ENCODE measurements at regions of chr5 and their contacts with region 1.

Region 1: DNA sequence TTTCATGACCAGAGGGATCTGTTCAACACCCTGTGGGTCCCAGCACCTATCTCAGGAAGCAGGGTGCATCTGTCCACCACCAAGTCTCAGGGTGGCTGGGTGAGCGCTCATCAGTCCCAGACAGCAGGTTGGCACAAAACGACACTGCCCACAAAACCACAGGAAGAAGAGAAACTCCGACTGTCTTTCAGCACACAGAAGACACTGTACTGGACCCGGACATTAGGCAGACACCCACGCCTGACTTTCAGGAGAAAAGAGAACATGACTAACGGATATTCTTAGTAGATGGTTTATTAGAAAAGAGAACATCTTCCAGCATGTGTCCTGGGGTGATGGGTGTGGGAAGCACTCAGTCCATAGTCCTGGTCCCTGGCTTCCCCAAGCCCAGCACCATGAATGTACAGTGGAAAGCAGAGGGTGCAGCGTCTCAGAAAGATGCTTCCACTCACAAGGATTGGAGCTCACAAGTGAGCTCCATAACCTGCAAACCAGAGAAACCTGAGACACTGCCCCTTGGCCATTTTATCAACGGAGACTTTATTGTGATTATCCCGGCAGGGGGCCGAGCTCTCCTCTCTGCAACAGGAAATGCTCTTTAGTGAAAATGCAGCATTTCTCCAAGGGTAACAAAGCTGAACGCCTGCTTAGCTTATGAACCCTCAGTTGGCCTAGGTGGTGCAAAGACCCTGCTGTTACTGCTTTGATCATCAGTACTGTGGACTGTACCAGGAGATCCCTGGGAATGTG is 35.8 kb upstream of the LCP2 start:
- DNase-seq: peak; percentile 79
- ATAC-seq: peak; percentile 33
- H3K4me3 Mint-ChIP-seq: peak overlapping the region; percentile 44
- H3K27ac Mint-ChIP-seq: no peak overlapping the region
- H3K4me1 Mint-ChIP-seq: peaks cover 77% of the 10 kb centered on the region
- H3K27me3 Mint-ChIP-seq: no peaks in the 10 kb centered on the region

Region 2: DNA sequence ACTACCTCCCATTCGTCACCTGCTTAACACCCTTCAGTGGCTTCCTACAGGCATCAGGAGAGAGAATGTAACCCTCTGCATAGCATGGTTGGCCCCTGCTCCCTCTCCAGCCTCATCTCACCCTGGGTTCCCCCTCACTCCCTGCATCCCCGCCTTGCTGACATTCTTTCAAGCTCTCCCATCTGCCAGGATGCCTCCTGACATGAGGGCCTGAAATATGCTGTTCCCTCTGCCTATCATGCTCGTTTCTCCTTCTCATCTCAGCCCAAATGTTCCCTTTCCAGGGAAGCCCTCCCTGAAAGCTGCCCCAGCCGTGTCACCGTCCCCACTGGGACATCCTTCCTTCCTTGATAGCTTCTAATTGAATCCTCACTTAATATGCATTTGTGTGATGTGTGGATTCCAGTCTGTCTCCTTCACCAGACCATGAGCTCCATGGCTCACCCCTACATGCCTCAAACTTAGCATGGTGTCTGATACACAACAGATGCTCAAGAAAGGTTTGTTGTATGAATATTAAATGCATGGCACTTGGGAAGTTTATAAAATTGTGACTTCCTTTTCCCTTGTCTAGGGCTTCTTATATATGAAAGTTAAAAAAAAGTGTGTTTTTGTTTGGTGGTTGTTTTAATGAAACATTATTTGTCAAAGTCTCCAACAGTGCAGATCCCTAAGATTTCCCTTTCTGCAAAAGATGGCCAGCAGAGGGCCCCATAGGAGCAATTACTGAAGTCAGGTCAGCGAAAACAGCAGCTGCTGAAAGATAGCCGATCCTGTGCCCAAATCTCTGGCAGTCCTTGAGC is 107.8 kb before region 1 on chr5:
- CTCF ChIA-PET with region 1: interaction called, 94 read pairs
- POLR2A ChIA-PET with region 1: no interaction called
- intact Hi-C with region 1: no loop called
- DNase-seq: peak; percentile 87
- ATAC-seq: peak; percentile 64
- H3K4me3 Mint-ChIP-seq: no peak overlapping the region
- H3K27ac Mint-ChIP-seq: no peak overlapping the region
- H3K4me1 Mint-ChIP-seq: peaks cover 3% of the 10 kb centered on the region
- H3K27me3 Mint-ChIP-seq: no peaks in the 10 kb centered on the region

Region 3: GRCh38 chr5:170267431-170268152 is 65.7 kb before region 1 on chr5:
- CTCF ChIA-PET with region 1: interaction called, 89 read pairs
- POLR2A ChIA-PET with region 1: interaction called, 8 read pairs
- intact Hi-C with region 1: loop called in 1 of 2 experiments (anchors 1 kb)
- DNase-seq: peak; percentile 91
- ATAC-seq: peak; percentile 50
- H3K4me3 Mint-ChIP-seq: peak overlapping the region; percentile 34
- H3K27ac Mint-ChIP-seq: peak overlapping the region; percentile 86
- H3K4me1 Mint-ChIP-seq: peaks cover 93% of the 10 kb centered on the region
- H3K27me3 Mint-ChIP-seq: no peaks in the 10 kb centered on the region

Region 4: DNA sequence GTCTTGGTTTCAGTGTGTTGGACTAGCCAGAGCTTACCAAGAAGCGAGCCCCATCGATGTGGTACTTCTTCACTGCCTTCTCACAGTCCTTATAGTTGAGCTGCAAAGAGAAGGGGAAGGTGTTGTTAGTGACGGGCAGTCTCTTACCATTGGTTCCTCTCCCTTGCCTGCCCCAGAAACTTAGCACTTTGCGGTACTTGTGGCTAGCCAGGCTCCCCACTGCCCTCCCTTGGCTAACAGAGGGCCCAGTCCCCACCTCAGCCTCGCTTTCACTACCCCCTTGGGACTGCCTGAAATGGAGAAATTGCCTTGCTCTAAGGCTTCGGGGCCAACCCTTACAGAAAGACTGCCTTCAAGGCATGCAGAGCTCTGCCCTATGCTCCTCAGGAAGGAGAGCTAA is 40.1 kb before region 1 on chr5:
- CTCF ChIA-PET with region 1: interaction called, 85 read pairs
- POLR2A ChIA-PET with region 1: interaction called, 23 read pairs
- intact Hi-C with region 1: loop called (anchors 1 kb)
- DNase-seq: peak; percentile 70
- ATAC-seq: peak; percentile 16
- H3K4me3 Mint-ChIP-seq: peak overlapping the region; percentile 88
- H3K27ac Mint-ChIP-seq: peak overlapping the region; percentile 97
- H3K4me1 Mint-ChIP-seq: peaks cover 72% of the 10 kb centered on the region
- H3K27me3 Mint-ChIP-seq: no peaks in the 10 kb centered on the region

Region 5: GRCh38 chr5:170312666-170313065 is 20.7 kb before region 1 on chr5:
- CTCF ChIA-PET with region 1: interaction called, 35 read pairs
- POLR2A ChIA-PET with region 1: interaction called, 52 read pairs
- intact Hi-C with region 1: loop called (anchors 1 kb)
- DNase-seq: peak; percentile 84
- ATAC-seq: peak; percentile 91
- H3K4me3 Mint-ChIP-seq: peak overlapping the region; percentile 80
- H3K27ac Mint-ChIP-seq: peak overlapping the region; percentile 98
- H3K4me1 Mint-ChIP-seq: peaks cover 67% of the 10 kb centered on the region
- H3K27me3 Mint-ChIP-seq: no peaks in the 10 kb centered on the region

Region 6: GRCh38 chr5:170464280-170465127 is 131.2 kb after region 1 on chr5:
- CTCF ChIA-PET with region 1: no interaction called
- POLR2A ChIA-PET with region 1: no interaction called
- intact Hi-C with region 1: no loop called
- DNase-seq: no peak
- ATAC-seq: no peak
- H3K4me3 Mint-ChIP-seq: no peak overlapping the region
- H3K27ac Mint-ChIP-seq: no peak overlapping the region
- H3K4me1 Mint-ChIP-seq: no peaks in the 10 kb centered on the region
- H3K27me3 Mint-ChIP-seq: peaks cover 23% of the 10 kb centered on the region

Region 7: DNA sequence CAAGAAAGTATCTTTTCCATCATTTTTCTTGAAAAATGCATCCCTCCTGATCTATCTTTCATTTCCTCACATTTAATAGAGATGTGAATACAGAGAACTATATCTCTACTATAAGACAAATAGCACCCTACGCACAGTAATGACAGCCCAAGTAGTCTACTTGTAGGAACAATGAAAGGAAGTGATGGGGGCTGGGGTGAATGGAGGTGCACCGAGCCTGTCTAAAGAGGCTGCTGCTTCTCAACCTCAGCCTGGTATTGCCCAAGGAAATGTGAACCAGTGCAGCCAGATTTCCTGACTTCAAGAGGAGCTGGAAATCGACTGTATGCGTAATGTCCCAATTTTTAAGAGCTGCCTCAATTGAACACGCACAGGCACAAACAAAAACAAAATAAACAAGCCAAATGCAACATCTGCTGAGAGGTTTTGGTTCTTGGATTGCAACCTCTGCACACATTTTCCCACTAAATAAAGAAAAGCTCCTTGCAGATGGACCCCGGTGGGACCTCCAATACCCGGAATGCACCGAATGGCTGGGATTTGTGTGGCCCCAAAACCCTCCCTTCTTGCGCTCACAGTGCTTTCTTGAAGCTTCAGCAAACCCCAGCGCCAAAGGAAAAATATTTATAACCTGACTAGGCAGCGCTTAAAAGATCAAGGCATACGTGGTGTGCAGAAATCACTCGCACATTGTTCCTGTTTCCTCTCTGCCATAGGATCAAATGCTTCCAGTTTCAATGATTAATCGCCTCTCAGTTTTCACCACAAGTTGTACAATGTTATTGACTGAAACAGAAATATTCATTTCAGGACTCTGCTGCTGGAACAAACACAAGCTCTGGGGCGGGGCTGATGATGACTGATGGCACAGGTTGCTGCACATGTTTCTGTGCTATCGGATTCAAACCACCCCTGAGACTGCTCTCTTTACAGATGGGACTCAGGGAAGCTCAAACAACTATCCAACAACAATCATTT is 238.8 kb after region 1 on chr5:
- CTCF ChIA-PET with region 1: no interaction called
- POLR2A ChIA-PET with region 1: no interaction called
- intact Hi-C with region 1: loop called in 1 of 2 experiments (anchors 1 kb)
- DNase-seq: peak; percentile 90
- ATAC-seq: peak; percentile 97
- H3K4me3 Mint-ChIP-seq: no peak overlapping the region
- H3K27ac Mint-ChIP-seq: no peak overlapping the region
- H3K4me1 Mint-ChIP-seq: peaks cover 20% of the 10 kb centered on the region
- H3K27me3 Mint-ChIP-seq: peaks cover 62% of the 10 kb centered on the region

Measured in activated CD4-positive, alpha-beta T cell treated with anti-CD3 and anti-CD28 coated beads for 36 hours (primary cell).